Right lobe of liver (tissue), 6 donors: ENCODE measurements at regions of chr2 and their contacts with region 1.

Region 1: DNA sequence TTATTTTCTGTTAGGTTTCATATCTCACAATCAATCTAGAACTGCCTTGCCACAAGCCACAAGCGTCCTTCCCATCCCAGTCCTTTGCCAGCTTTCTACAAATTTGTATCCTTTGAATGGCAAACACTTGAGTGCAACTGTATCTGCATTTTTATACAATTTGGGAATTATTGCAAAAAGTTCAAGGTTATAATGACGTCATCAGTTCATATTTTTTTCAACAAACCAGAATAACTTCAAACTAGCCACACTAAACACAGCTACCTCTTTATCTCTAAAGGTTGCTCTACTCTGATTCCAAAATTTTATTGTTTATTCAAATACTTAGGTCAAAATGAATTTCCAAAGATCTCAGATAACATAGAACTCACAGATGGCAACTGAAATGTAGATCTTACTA is 877.1 kb downstream of the TMEM182 start:
- DNase-seq: no peak
- ATAC-seq: no peak
- H3K4me3 ChIP-seq: no peak overlapping the region
- H3K27ac ChIP-seq: no peak overlapping the region
- H3K4me1 ChIP-seq: no peaks in the 10 kb centered on the region
- H3K27me3 ChIP-seq: no peaks in the 10 kb centered on the region
- CTCF ChIP-seq: no peak
- POLR2A ChIP-seq: no peak

Region 2: DNA sequence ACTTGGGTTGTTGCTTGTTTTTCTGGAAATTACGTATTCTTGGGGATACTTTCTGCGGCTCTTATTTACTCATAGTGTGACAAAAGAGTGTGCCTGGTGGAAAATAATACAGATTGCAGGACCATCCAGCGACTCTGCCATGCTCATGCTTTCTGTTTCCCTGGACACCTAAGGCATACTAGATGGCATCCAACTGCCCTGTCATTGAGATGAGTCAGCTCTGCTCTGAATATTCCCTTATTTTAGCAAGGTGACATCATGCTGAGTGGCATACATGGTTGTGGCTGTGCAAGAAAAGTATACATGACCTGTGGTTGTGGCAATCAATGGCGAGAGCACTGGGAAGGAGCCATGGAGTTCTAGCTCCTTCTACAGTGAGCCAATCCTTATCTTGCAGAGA is 406.1 kb before region 1 on chr2:
- intact Hi-C with region 1: no loop called
- DNase-seq: no peak
- ATAC-seq: no peak
- H3K4me3 ChIP-seq: no peak overlapping the region
- H3K27ac ChIP-seq: no peak overlapping the region
- H3K4me1 ChIP-seq: no peaks in the 10 kb centered on the region
- H3K27me3 ChIP-seq: no peaks in the 10 kb centered on the region
- CTCF ChIP-seq: no peak
- POLR2A ChIP-seq: no peak

Region 3: DNA sequence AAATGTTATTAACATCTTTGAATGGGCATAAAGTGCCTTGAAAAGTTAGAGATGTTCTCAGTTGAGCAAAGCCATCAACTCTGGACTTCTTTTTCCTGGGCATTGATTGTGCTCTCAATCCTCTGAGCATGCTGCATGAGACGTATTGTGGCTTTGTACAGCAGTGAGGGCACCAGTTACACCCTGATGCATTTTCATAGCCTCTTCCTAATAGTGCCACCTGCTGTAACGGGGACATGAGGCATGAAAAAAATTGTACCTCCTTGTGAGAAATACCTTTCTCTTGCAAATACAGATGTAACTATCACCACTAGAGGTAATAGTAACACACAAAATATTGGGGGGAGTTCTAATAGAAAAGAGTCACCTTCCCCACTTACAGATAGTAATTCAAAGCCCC is 179.7 kb before region 1 on chr2:
- intact Hi-C with region 1: no loop called
- DNase-seq: no peak
- ATAC-seq: peak in 2 of 4 donors; percentile 34 to 52
- H3K4me3 ChIP-seq: no peak overlapping the region
- H3K27ac ChIP-seq: no peak overlapping the region
- H3K4me1 ChIP-seq: no peaks in the 10 kb centered on the region
- H3K27me3 ChIP-seq: no peaks in the 10 kb centered on the region
- CTCF ChIP-seq: no peak
- POLR2A ChIP-seq: no peak

Region 4: GRCh38 chr2:103743195-103743594 is 104.2 kb after region 1 on chr2:
- intact Hi-C with region 1: loop called in 1 of 2 experiments (anchors 10 kb)
- DNase-seq: no peak
- ATAC-seq: no peak
- H3K4me3 ChIP-seq: no peak overlapping the region
- H3K27ac ChIP-seq: no peak overlapping the region
- H3K4me1 ChIP-seq: no peaks in the 10 kb centered on the region
- H3K27me3 ChIP-seq: no peaks in the 10 kb centered on the region
- CTCF ChIP-seq: no peak
- POLR2A ChIP-seq: no peak

Region 5: GRCh38 chr2:104043864-104044263 is 404.9 kb after region 1 on chr2:
- intact Hi-C with region 1: no loop called
- DNase-seq: no peak
- ATAC-seq: no peak
- H3K4me3 ChIP-seq: no peak overlapping the region
- H3K27ac ChIP-seq: no peak overlapping the region
- H3K4me1 ChIP-seq: no peaks in the 10 kb centered on the region
- H3K27me3 ChIP-seq: no peaks in the 10 kb centered on the region
- CTCF ChIP-seq: no peak
- POLR2A ChIP-seq: no peak

Region 6: GRCh38 chr2:104078431-104079162 is 439.6 kb after region 1 on chr2:
- intact Hi-C with region 1: no loop called
- DNase-seq: peak in 1 of 3 donors; percentile 42
- ATAC-seq: peak; percentile 33 to 45 (median 38)
- H3K4me3 ChIP-seq: no peak overlapping the region
- H3K27ac ChIP-seq: no peak overlapping the region
- H3K4me1 ChIP-seq: no peaks in the 10 kb centered on the region
- H3K27me3 ChIP-seq: no peaks in the 10 kb centered on the region
- CTCF ChIP-seq: peak in 2 of 4 donors; percentile 16 to 34
- POLR2A ChIP-seq: no peak